ENCODE measurements at regions of chr6 and their contacts with region 1.

Region 1: GRCh38 chr6:32413427-32414047 is 6.6 kb upstream of the BTNL2 start:
- DNase-seq: peak; percentile 70
- H3K4me3 ChIP-seq: no peak overlapping the region
- H3K27ac ChIP-seq: no peak overlapping the region
- H3K4me1 ChIP-seq: no peaks in the 10 kb centered on the region
- H3K27me3 ChIP-seq: peaks cover 33% of the 10 kb centered on the region

Region 2: DNA sequence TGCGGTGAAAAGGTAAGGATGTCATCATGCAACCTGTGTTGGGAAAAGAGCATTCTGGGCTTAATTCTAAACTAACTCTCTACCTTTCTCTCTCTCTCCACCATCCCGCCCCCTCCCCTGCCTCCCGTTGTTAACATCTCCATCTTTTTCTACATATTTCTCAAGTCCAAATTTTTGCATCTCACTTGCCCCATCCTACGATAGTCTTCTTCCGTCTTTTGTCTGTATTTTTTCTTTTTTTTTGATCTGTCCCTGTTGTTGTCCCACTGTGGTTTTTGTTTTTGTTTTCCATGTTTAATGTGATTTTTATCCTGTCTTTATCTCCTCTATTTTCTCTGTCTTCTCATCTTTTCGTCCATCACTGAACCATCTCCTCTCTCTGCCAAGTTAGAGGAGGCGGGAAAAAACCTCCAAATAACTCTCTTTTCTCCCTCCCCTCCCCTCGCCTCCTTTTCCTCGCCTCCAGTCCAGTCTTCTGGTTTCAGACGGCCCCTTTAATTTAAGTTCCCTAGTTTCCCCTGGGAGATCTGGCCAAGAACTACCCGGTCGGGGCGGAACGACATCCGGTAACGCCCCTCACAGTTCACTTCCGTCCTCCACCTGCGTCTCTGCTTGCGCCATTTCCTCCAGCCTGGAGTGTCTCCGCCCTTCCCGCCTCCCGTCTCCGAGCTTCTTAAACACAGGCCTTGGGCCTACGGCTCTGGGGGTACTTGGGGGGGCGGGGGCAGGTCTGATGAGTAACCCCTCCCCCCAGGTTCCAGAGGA is 866.4 kb before region 1 on chr6 and contains the start of gene NFKBIL1:
- in situ Hi-C with region 1: no loop called
- DNase-seq: peak; percentile 99
- H3K4me3 ChIP-seq: peak within 1 kb of the TSS; percentile 88
- H3K27ac ChIP-seq: peak within 1 kb of the TSS; percentile 75
- H3K4me1 ChIP-seq: peaks cover 10% of the 10 kb centered on the region; the same call in 1 of the 2 replicates
- H3K27me3 ChIP-seq: no peaks in the 10 kb centered on the region
- total RNA-seq, gene NFKBIL1: 20.4 and 22.9 TPM in 2 replicates

Region 3: GRCh38 chr6:32244946-32245398 is 168.6 kb before region 1 on chr6:
- in situ Hi-C with region 1: loop called (anchors 25 kb)
- DNase-seq: peak; percentile 82
- H3K4me3 ChIP-seq: peak overlapping the region; percentile 60
- H3K27ac ChIP-seq: no peak overlapping the region
- H3K4me1 ChIP-seq: peaks cover 5% of the 10 kb centered on the region; the same call in 1 of the 2 replicates
- H3K27me3 ChIP-seq: no peaks in the 10 kb centered on the region

Region 4: GRCh38 chr6:32609731-32610640 is 196.4 kb after region 1 on chr6:
- in situ Hi-C with region 1: no loop called
- DNase-seq: peak; percentile 87
- H3K4me3 ChIP-seq: no peak overlapping the region
- H3K27ac ChIP-seq: no peak overlapping the region
- H3K4me1 ChIP-seq: no peaks in the 10 kb centered on the region
- H3K27me3 ChIP-seq: no peaks in the 10 kb centered on the region

Region 5: GRCh38 chr6:32794510-32794909 is 381.0 kb after region 1 on chr6:
- in situ Hi-C with region 1: loop called (anchors 5 kb)
- DNase-seq: no peak
- H3K4me3 ChIP-seq: no peak overlapping the region
- H3K27ac ChIP-seq: no peak overlapping the region
- H3K4me1 ChIP-seq: no peaks in the 10 kb centered on the region
- H3K27me3 ChIP-seq: peaks cover 41% of the 10 kb centered on the region

Measured in GM23248 (cell line).